Endothelial cell of umbilical vein (primary cell): ENCODE measurements at regions of chr21 and their contacts with region 1.

Region 1: GRCh38 chr21:33761441-33762036 is 119.2 kb downstream of the ITSN1 start:
- DNase-seq: peak; percentile 95
- H3K4me3 ChIP-seq: peak overlapping the region in 2 of 3 experiments; percentile 6 to 61
- H3K27ac ChIP-seq: peak overlapping the region; percentile 97
- H3K4me1 ChIP-seq: peaks cover 41% of the 10 kb centered on the region
- H3K27me3 ChIP-seq: no peaks in the 10 kb centered on the region
- CTCF ChIP-seq: no peak
- POLR2A ChIP-seq: peak; percentile 58

Region 2: GRCh38 chr21:33451634-33452071 is 309.9 kb before region 1 on chr21:
- CTCF ChIA-PET with region 1: no interaction called
- POLR2A ChIA-PET with region 1: no interaction called
- dilution Hi-C with region 1: no loop called
- intact Hi-C with region 1: no loop called
- DNase-seq: no peak
- H3K4me3 ChIP-seq: no peak overlapping the region
- H3K27ac ChIP-seq: no peak overlapping the region
- H3K4me1 ChIP-seq: no peaks in the 10 kb centered on the region
- H3K27me3 ChIP-seq: no peaks in the 10 kb centered on the region
- CTCF ChIP-seq: no peak
- POLR2A ChIP-seq: no peak

Region 3: DNA sequence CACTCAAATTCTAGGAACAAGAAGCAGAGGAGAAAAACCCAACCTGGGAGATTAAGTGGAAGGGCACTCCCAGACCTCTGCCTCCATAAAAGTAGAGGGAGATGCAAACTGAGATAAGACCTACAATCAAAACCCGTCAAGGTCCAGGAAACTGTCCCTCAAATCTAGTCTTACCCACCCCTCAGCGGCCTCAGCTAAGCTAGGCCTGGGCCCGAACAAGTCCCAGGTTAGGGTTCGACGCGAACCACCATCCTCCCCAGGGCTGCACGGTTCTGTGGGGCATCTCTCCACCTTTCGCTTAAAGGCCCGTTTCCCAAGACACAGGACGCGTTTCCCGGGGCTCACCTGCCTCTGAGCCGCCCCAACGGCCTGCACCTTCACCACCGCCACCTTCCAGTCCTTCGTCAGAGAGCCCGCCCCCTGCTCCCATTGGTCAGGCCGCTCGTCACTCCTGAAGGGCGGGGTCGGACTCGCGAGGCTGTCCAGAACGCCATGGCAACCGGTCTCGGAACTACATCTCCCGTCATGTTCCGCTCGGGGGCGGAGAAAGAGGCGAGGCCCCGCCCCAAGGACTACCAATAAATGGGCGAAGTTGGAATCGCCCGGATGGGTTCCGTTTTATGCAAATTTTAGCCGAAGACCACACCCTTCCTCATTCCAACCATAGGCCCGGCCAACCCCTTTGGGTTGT is 120.1 kb before region 1 on chr21 and contains the start of gene CRYZL1:
- CTCF ChIA-PET with region 1: no interaction called
- POLR2A ChIA-PET with region 1: no interaction called
- dilution Hi-C with region 1: no loop called
- intact Hi-C with region 1: loop called (anchors 1 kb)
- DNase-seq: peak; percentile 99
- H3K4me3 ChIP-seq: peak within 1 kb of the TSS; percentile 54 to 84 (median 76)
- H3K27ac ChIP-seq: peak within 1 kb of the TSS; percentile 66
- H3K4me1 ChIP-seq: peaks cover 19% of the 10 kb centered on the region
- H3K27me3 ChIP-seq: no peaks in the 10 kb centered on the region
- CTCF ChIP-seq: no peak
- POLR2A ChIP-seq: peak; percentile 62
- total RNA-seq, gene CRYZL1: 41.1 and 42.1 TPM in 2 replicates

Region 4: DNA sequence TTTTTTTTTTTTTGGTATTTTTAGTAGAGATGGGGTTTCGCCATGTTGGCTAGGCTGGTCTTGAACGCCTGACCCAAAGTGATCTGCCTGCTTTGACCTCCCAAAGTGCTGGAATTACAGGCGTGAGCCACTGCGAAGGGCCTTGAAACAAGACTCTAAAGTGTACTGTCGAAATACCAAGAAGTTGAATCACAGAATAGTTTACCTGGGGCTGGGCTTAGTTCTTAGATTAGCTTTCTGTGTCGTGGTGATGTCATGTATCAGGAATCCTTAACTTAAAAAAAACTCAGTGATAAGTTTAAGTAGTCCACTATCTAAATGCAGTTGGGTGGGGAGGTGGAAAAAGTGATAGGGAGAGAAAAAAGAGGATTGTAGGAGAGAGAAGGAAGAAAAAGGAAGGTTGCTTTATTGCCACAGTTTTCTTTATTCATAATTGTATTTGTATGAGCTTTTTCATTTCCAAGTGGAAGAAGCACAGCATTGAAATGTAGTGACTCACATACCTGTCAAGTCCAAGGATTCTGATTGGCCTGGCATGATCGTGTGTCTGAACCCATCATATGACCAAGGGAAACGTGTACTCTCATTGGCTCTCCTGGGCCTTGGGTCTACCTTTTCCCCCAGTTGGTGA is 105.8 kb before region 1 on chr21:
- CTCF ChIA-PET with region 1: interaction called, 3 read pairs
- POLR2A ChIA-PET with region 1: no interaction called
- dilution Hi-C with region 1: no loop called
- intact Hi-C with region 1: loop called (anchors 1 kb)
- DNase-seq: peak; percentile 90
- H3K4me3 ChIP-seq: no peak overlapping the region
- H3K27ac ChIP-seq: peak overlapping the region; percentile 81
- H3K4me1 ChIP-seq: peaks cover 52% of the 10 kb centered on the region
- H3K27me3 ChIP-seq: no peaks in the 10 kb centered on the region
- CTCF ChIP-seq: no peak
- POLR2A ChIP-seq: no peak

Region 5: DNA sequence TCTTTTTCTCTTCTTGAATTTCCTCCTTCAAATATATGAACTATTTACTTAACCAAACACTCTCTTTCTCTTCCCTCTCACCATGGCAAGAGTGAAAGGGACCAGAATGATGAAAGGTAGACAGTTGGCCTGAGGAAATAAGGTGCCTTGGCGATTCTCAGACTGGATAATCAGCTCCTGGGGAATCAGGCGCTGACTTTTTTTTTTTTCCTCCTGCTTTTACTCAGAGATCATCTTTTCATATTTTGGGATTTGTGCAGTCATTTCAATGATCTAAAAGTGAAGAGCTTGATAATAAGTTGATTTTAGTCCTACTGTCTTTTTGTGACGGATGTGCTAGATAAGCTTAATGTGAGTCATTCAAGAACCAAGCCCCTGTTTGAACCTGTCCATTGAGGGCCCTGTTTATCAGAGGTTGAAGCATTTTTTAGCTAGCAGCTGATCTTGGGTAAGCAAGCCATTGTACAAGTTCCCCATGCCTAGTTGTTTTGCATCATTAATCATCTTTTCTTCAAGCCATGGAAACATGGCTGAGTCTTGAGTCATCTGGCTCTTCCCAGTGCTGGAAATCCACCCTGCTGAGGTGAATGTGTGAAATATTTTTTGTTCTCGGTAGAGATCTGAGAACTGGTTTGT is 78.4 kb before region 1 on chr21:
- CTCF ChIA-PET with region 1: interaction called, 4 read pairs
- POLR2A ChIA-PET with region 1: no interaction called
- dilution Hi-C with region 1: no loop called
- intact Hi-C with region 1: loop called (anchors 1 kb)
- DNase-seq: peak; percentile 90
- H3K4me3 ChIP-seq: no peak overlapping the region
- H3K27ac ChIP-seq: peak overlapping the region; percentile 93
- H3K4me1 ChIP-seq: peaks cover 44% of the 10 kb centered on the region
- H3K27me3 ChIP-seq: no peaks in the 10 kb centered on the region
- CTCF ChIP-seq: no peak
- POLR2A ChIP-seq: no peak

Region 6: DNA sequence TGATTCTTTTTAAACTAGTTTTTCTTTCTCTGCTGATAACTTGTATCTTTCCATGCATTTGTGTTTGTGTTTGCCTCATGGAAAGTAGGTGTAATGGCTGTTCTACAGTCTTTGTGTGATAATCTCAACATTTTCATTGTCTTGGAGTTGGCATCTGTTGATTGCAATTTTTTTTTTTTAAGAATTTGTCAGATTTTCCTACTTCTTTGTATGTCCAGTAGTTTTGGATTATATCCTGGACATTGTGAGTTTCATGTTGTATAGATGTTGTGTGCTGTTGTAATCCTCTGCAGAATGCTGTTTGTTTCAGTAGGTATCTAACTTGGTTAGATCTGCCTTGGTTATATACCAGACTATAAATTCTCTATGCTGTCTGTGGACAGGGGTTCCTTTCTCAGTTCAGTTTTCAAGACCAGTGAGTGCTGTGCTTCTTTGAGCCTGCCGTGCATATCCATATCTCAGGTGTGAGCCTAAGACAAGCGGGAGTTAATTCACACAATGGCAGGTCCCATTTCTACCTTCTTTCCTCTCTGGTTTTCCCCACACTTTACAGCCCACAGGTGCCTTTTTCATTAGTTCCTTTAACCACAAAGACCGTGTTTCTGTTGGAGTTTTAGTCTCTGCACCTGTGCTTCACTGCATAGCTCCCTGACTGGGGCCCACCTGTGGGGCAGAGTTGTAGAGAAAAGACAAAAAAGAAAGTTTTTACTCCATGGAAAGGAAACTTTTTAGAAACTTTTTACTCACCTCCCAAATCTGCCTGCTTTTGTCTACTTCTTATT is 49.3 kb before region 1 on chr21:
- CTCF ChIA-PET with region 1: interaction called, 4 read pairs
- POLR2A ChIA-PET with region 1: interaction called, 3 read pairs
- dilution Hi-C with region 1: no loop called
- intact Hi-C with region 1: loop called (anchors 5 kb)
- DNase-seq: peak; percentile 43
- H3K4me3 ChIP-seq: no peak overlapping the region
- H3K27ac ChIP-seq: no peak overlapping the region
- H3K4me1 ChIP-seq: peaks cover 3% of the 10 kb centered on the region
- H3K27me3 ChIP-seq: no peaks in the 10 kb centered on the region
- CTCF ChIP-seq: no peak
- POLR2A ChIP-seq: no peak

Region 7: DNA sequence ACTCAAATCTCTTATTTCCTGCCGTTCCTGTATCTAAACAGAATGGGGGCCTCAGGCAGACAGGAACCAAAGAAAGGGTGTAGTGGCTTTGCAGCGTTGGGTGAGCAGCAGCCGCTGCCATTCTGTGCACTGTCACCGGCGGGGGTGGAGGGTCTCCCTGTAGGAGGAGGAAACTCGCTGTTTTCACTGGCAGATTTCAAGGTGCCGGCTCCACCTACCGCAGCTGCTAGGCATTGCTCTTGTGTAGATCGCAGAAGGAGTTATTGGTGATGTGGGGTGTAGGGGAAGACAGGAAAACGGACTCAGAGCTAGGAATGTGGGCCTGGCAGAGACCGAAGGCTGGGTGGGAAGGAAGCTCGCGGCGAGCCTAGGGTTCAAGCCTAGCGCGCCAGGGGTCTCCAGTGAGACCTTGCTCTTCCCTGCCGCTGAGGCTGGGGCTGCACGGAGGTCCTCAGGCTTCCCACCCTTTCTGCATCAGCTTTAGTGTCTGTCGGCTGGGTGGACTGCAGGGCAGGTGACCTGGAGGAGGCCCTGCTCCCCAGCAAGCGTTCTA is 133.3 kb after region 1 on chr21:
- CTCF ChIA-PET with region 1: interaction called, 4 read pairs
- POLR2A ChIA-PET with region 1: no interaction called
- dilution Hi-C with region 1: no loop called
- intact Hi-C with region 1: loop called (anchors 5 kb)
- DNase-seq: peak; percentile 92
- H3K4me3 ChIP-seq: peak overlapping the region in 1 of 3 experiments; percentile 3
- H3K27ac ChIP-seq: no peak overlapping the region
- H3K4me1 ChIP-seq: peaks cover 30% of the 10 kb centered on the region
- H3K27me3 ChIP-seq: no peaks in the 10 kb centered on the region
- CTCF ChIP-seq: peak; percentile 75 to 78
- POLR2A ChIP-seq: no peak

Region 8: GRCh38 chr21:34004974-34005373 is 243.4 kb after region 1 on chr21:
- CTCF ChIA-PET with region 1: no interaction called
- POLR2A ChIA-PET with region 1: no interaction called
- dilution Hi-C with region 1: no loop called
- intact Hi-C with region 1: no loop called
- DNase-seq: no peak
- H3K4me3 ChIP-seq: no peak overlapping the region
- H3K27ac ChIP-seq: no peak overlapping the region
- H3K4me1 ChIP-seq: no peaks in the 10 kb centered on the region
- H3K27me3 ChIP-seq: peaks cover 5 to 6% of the 10 kb centered on the region in 2 experiments
- CTCF ChIP-seq: no peak
- POLR2A ChIP-seq: no peak

Region 9: GRCh38 chr21:34526618-34527290 is 765.2 kb after region 1 on chr21:
- CTCF ChIA-PET with region 1: no interaction called
- POLR2A ChIA-PET with region 1: no interaction called
- dilution Hi-C with region 1: no loop called
- intact Hi-C with region 1: loop called (anchors 5 kb)
- DNase-seq: peak; percentile 99
- H3K4me3 ChIP-seq: peak overlapping the region; percentile 41 to 93 (median 76)
- H3K27ac ChIP-seq: peak overlapping the region; percentile 98
- H3K4me1 ChIP-seq: peaks cover 23% of the 10 kb centered on the region
- H3K27me3 ChIP-seq: no peaks in the 10 kb centered on the region
- CTCF ChIP-seq: no peak
- POLR2A ChIP-seq: peak; percentile 97